Activated CD4-positive, alpha-beta T cell treated with anti-CD3 and anti-CD28 coated beads, Interleukin-2, amount 10 ng/mL, durations not matched to agents 24 days and 14 days (primary cell): ENCODE measurements at regions of chr1 and their contacts with region 1.

Region 1: DNA sequence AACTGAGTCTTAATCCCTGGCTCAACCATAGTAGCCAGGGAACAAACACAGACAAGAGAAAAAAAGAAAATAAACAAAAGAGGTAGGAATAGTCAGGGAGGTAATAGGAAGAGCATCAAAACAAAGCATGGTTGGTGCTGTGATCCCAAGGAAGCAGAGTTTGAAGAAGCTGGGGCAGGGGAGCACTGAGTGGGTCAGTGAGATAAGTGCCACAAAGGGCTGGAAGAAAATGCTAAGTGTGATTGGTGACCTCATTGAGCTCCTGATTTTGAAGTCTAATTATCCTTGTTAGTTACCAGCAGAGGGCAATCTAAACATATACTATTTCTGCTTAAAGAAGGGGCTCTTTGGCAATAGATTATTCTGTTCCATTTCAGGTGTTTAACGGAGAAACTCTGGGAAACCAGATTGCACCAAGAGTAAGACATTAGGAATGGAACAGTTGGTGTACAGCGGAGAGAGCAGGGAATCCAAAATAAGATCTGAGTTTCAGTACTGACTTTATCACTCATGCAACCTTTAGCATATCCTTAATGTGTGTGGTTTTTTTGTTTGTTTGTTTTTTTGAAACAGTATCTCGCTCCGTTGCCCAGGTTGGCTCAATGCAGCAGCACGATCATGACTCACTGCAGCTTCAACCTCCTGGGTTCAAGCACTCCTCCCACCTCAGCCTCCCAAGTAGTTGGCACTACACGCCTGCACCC is 30.7 kb upstream of the KIAA1614 start:
- DNase-seq: no peak
- H3K4me3 Mint-ChIP-seq: no peak overlapping the region
- H3K27ac Mint-ChIP-seq: no peak overlapping the region
- H3K4me1 Mint-ChIP-seq: peaks cover 3% of the 10 kb centered on the region
- H3K27me3 Mint-ChIP-seq: no peaks in the 10 kb centered on the region

Region 2: GRCh38 chr1:181033799-181034451 is 152.0 kb after region 1 on chr1 and contains the start of gene MR1:
- intact Hi-C with region 1: loop called (anchors 10 kb)
- DNase-seq: peak; percentile 88
- H3K4me3 Mint-ChIP-seq: peak within 1 kb of the TSS; percentile 96
- H3K27ac Mint-ChIP-seq: peak within 1 kb of the TSS; percentile 97
- H3K4me1 Mint-ChIP-seq: peaks cover 51% of the 10 kb centered on the region
- H3K27me3 Mint-ChIP-seq: peaks cover 5% of the 10 kb centered on the region
- total RNA-seq, gene MR1: 14.6 and 16.2 TPM in 2 replicates